Activated CD4-positive, alpha-beta memory T cell treated with anti-CD3 and anti-CD28 coated beads for 36 hours (primary cell): ENCODE measurements at regions of chr2 and their contacts with region 1.

Region 1: GRCh38 chr2:111120253-111121027 is at the start of gene BCL2L11:
- DNase-seq: peak; percentile 94
- H3K4me3 Mint-ChIP-seq: peak within 1 kb of the TSS; percentile 90
- H3K27ac Mint-ChIP-seq: peak within 1 kb of the TSS; percentile 88
- H3K4me1 Mint-ChIP-seq: peaks cover 60% of the 10 kb centered on the region
- H3K27me3 Mint-ChIP-seq: peaks cover 13% of the 10 kb centered on the region
- total RNA-seq, gene BCL2L11: 21.9 to 25.6 TPM

Region 2: DNA sequence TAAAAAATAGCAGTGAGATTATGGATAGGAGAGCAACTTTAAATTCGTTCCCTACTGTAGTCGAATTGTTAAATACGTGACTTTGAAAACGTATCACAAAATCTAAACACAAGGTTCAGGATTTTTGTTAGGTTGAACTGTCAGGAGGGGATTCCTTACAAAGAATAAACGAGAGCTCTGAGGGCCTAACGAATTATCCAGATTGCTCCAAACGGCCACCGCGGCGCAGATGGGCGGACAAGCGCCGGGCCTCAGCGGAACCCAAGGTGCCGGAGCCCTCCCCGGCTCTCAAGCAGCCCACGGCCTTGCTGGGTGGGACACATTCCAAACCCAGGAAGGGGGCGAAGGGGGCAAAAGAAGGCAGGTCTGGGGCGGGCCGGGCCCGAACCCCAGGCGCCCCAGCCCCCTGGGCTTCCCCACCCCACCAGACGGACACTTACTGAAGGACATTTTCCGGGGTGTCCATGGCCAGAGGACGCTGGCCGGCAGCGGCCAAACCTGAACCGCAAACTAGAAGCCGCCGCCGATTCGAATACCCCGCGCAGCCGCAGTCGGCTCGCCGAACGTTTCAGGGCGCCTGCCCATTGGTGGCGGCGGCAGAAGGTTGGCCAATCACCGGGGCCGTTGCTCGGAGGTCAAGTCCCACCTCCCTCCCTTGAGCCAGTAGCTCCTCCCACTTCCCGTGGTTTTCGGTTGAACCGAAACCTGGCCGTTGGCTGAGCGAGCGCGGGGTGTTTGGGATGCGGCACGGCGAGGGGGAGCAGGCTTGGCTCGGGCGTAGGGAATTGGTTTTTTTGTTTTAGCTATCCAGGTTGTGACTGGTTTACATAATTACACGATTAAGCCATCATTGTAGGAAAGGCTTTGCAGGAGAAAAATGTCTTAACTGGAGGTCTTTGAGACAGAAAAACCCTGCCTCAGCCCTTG is 442.6 kb before region 1 on chr2 and contains the start of gene BUB1:
- CTCF ChIA-PET with region 1: no interaction called
- POLR2A ChIA-PET with region 1: no interaction called
- intact Hi-C with region 1: loop called (anchors 5 kb)
- DNase-seq: peak; percentile 97
- H3K4me3 Mint-ChIP-seq: peak within 1 kb of the TSS; percentile 94
- H3K27ac Mint-ChIP-seq: peak within 1 kb of the TSS; percentile 96
- H3K4me1 Mint-ChIP-seq: peaks cover 21% of the 10 kb centered on the region
- H3K27me3 Mint-ChIP-seq: no peaks in the 10 kb centered on the region
- total RNA-seq, gene BUB1: 90.8 to 102 TPM

Region 3: DNA sequence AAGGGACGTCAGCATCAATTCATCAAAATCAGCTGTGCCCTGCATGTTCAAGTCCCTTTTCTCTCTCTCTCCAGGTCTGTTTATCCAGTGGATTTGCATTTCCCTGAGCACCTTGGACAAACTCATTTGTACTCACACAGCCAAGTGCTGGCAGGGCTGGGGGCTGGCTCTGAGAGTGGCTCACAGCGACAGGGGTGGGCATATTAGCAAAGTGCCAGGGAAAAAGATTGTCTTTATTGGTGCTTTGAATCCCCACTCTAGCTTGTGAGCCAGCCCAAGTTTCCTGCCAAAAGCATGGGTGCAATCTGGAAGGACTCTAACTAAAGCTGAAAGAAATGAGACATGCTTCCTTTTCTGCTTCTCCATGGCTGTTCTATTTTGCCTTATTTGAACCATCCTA is 331.5 kb before region 1 on chr2:
- CTCF ChIA-PET with region 1: no interaction called
- POLR2A ChIA-PET with region 1: no interaction called
- intact Hi-C with region 1: no loop called
- DNase-seq: no peak
- H3K4me3 Mint-ChIP-seq: no peak overlapping the region
- H3K27ac Mint-ChIP-seq: no peak overlapping the region
- H3K4me1 Mint-ChIP-seq: no peaks in the 10 kb centered on the region
- H3K27me3 Mint-ChIP-seq: peaks cover 46% of the 10 kb centered on the region

Region 4: GRCh38 chr2:111030260-111030891 is 90.1 kb before region 1 on chr2:
- CTCF ChIA-PET with region 1: interaction called, 3 read pairs
- POLR2A ChIA-PET with region 1: no interaction called
- intact Hi-C with region 1: loop called (anchors 5 kb)
- DNase-seq: peak; percentile 58
- H3K4me3 Mint-ChIP-seq: no peak overlapping the region
- H3K27ac Mint-ChIP-seq: no peak overlapping the region
- H3K4me1 Mint-ChIP-seq: peaks cover 25% of the 10 kb centered on the region
- H3K27me3 Mint-ChIP-seq: peaks cover 62% of the 10 kb centered on the region

Region 5: DNA sequence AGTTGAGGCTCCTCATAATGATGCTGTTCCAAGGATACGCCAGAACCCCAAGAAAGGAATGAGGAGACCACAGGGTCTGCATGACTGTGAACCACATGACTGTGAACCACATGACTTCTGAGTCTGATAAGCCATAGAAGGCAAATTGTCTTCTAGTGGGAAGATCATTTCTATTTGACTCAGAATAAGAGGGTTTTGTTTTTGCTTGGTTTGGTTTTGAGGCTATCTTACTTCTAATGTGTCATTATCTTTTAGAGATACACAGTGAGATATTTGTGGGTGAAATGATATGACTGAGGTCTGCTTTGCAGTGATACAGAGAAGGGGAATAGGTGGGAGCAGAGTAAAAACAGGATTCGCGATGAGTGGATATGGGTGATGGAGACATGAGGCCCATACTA is 28.6 kb before region 1 on chr2:
- CTCF ChIA-PET with region 1: interaction called, 3 read pairs
- POLR2A ChIA-PET with region 1: no interaction called
- intact Hi-C with region 1: loop called (anchors 2 kb)
- DNase-seq: peak; percentile 34
- H3K4me3 Mint-ChIP-seq: no peak overlapping the region
- H3K27ac Mint-ChIP-seq: no peak overlapping the region
- H3K4me1 Mint-ChIP-seq: peaks cover 18% of the 10 kb centered on the region
- H3K27me3 Mint-ChIP-seq: peaks cover 49% of the 10 kb centered on the region

Region 6: DNA sequence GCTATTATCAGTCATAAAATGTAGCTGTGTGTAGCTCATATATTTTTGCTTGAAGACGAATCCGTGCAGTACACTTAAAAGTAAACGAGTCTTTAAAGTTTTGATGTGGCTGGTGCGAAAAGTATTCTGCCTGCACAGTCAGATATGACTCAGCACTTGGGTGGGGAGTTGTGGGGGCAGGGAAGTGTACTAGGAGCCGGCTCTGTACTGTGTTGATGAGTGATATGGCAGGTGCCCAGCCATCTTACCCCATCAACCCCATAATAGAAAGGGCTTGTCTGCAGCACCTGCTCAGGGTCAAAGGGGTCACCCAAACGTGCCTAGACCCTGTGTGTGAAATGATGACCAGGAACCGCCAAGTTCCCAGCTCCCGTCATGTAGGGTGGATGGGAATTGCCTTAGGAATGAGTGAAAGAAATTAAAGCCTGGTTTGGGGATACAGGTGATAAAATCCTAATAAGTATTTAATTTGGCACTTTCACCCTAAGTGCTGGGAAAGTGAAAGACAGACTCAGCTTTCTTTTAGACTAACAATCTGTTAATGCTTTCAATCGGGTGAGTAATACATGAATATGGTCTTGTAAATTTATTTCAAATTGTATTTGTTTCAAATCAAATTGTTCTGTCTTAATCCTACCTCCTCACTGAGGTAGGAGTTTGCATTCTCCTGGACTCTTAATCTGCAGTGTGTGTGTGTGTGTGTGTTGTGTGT is 48.2 kb after region 1 on chr2:
- CTCF ChIA-PET with region 1: interaction called, 6 read pairs
- POLR2A ChIA-PET with region 1: no interaction called
- intact Hi-C with region 1: loop called (anchors 5 kb)
- DNase-seq: peak; percentile 86
- H3K4me3 Mint-ChIP-seq: no peak overlapping the region
- H3K27ac Mint-ChIP-seq: no peak overlapping the region
- H3K4me1 Mint-ChIP-seq: peaks cover 21% of the 10 kb centered on the region
- H3K27me3 Mint-ChIP-seq: peaks cover 15% of the 10 kb centered on the region